CD8-positive, alpha-beta T cell (primary cell): ENCODE measurements at regions of chr14 and their contacts with region 1.

Region 1: GRCh38 chr14:93115069-93115820 is 480 bp downstream of the ITPK1 start:
- DNase-seq: peak; percentile 65 to 93 (median 81)
- ATAC-seq: peak; percentile 81
- H3K4me3 ChIP-seq: peak overlapping the region; percentile 58 to 76
- H3K4me3 Mint-ChIP-seq: peak overlapping the region; percentile 88
- H3K27ac ChIP-seq: peak overlapping the region; percentile 43 to 53
- H3K27ac Mint-ChIP-seq: peak overlapping the region; percentile 89
- H3K4me1 ChIP-seq: peaks cover 34% of the 10 kb centered on the region
- H3K4me1 Mint-ChIP-seq: peaks cover 34% of the 10 kb centered on the region
- H3K27me3 ChIP-seq: no peaks in the 10 kb centered on the region
- H3K27me3 Mint-ChIP-seq: no peaks in the 10 kb centered on the region
- CTCF ChIP-seq: no peak

Region 2: GRCh38 chr14:93033983-93034670 is 81.1 kb before region 1 on chr14:
- CTCF ChIA-PET with region 1: interaction called, 43 read pairs
- POLR2A ChIA-PET with region 1: interaction called, 5 read pairs
- intact Hi-C with region 1: loop called (anchors 1 to 5 kb)
- DNase-seq: peak; percentile 19 to 82 (median 65)
- ATAC-seq: peak; percentile 89
- H3K4me3 ChIP-seq: peak overlapping the region in 1 of 2 experiments; percentile 38
- H3K4me3 Mint-ChIP-seq: peak overlapping the region; percentile 77
- H3K27ac ChIP-seq: peak overlapping the region; percentile 49 to 54
- H3K27ac Mint-ChIP-seq: peak overlapping the region; percentile 88
- H3K4me1 ChIP-seq: peaks cover 29% of the 10 kb centered on the region
- H3K4me1 Mint-ChIP-seq: peaks cover 36% of the 10 kb centered on the region
- H3K27me3 ChIP-seq: no peaks in the 10 kb centered on the region
- H3K27me3 Mint-ChIP-seq: no peaks in the 10 kb centered on the region
- CTCF ChIP-seq: peak; percentile 74

Region 3: DNA sequence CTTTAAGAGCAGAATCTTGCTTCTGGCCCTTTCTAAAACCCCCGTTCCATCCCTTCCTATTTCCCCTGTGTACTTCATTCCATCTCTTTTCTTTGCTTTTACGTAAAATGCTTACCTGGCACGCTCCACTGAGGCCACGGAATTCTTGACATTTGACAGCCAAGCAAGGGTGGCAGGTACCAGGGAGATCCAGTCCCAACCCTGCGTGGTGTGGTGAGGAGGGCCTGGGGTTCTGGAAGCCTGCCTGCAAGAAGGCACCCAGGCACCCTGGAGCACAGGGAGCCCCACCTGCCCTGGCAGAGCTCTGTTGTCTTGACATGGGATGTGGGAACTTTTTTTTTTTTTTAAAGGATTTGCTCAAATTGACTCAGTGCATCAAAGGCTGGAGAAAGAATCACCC is 48.2 kb before region 1 on chr14:
- CTCF ChIA-PET with region 1: interaction called, 65 read pairs
- POLR2A ChIA-PET with region 1: interaction called, 6 read pairs
- intact Hi-C with region 1: loop called in 1 of 2 experiments (anchors 2 kb)
- DNase-seq: no peak
- ATAC-seq: no peak
- H3K4me3 ChIP-seq: no peak overlapping the region
- H3K4me3 Mint-ChIP-seq: peak overlapping the region; percentile 79
- H3K27ac ChIP-seq: peak overlapping the region; percentile 57 to 74
- H3K27ac Mint-ChIP-seq: peak overlapping the region; percentile 91
- H3K4me1 ChIP-seq: peaks cover 58% of the 10 kb centered on the region
- H3K4me1 Mint-ChIP-seq: peaks cover 73% of the 10 kb centered on the region
- H3K27me3 ChIP-seq: no peaks in the 10 kb centered on the region
- H3K27me3 Mint-ChIP-seq: no peaks in the 10 kb centered on the region
- CTCF ChIP-seq: no peak

Region 4: GRCh38 chr14:93126111-93126510 is 10.9 kb after region 1 on chr14:
- CTCF ChIA-PET with region 1: interaction called, 249 read pairs
- POLR2A ChIA-PET with region 1: no interaction called
- intact Hi-C with region 1: no loop called
- DNase-seq: no peak
- ATAC-seq: no peak
- H3K4me3 ChIP-seq: no peak overlapping the region
- H3K4me3 Mint-ChIP-seq: no peak overlapping the region
- H3K27ac ChIP-seq: no peak overlapping the region
- H3K27ac Mint-ChIP-seq: no peak overlapping the region
- H3K4me1 ChIP-seq: no peaks in the 10 kb centered on the region
- H3K4me1 Mint-ChIP-seq: no peaks in the 10 kb centered on the region
- H3K27me3 ChIP-seq: no peaks in the 10 kb centered on the region
- H3K27me3 Mint-ChIP-seq: no peaks in the 10 kb centered on the region
- CTCF ChIP-seq: no peak

Region 5: GRCh38 chr14:93184388-93185353 is 69.4 kb after region 1 on chr14 and contains the starts of genes LYSET and MOAP1:
- CTCF ChIA-PET with region 1: interaction called, 35 read pairs
- POLR2A ChIA-PET with region 1: interaction called, 27 read pairs
- intact Hi-C with region 1: loop called (anchors 1 kb)
- DNase-seq: peak; percentile 84 to 97 (median 92)
- ATAC-seq: peak; percentile 86
- H3K4me3 ChIP-seq: peak within 1 kb of the TSS; percentile 89 to 100
- H3K4me3 Mint-ChIP-seq: peak within 1 kb of the TSS; percentile 92
- H3K27ac ChIP-seq: peak within 1 kb of the TSS; percentile 97 to 100
- H3K27ac Mint-ChIP-seq: peak within 1 kb of the TSS; percentile 95
- H3K4me1 ChIP-seq: peaks cover 34% of the 10 kb centered on the region
- H3K4me1 Mint-ChIP-seq: peaks cover 45% of the 10 kb centered on the region
- H3K27me3 ChIP-seq: no peaks in the 10 kb centered on the region
- H3K27me3 Mint-ChIP-seq: no peaks in the 10 kb centered on the region
- CTCF ChIP-seq: peak; percentile 49
- total RNA-seq, gene LYSET: 2.4 to 5.1 TPM
- total RNA-seq, gene MOAP1: 114 to 122 TPM

Region 6: GRCh38 chr14:93892923-93893558 is 777.8 kb after region 1 on chr14:
- CTCF ChIA-PET with region 1: interaction called, 3 read pairs
- POLR2A ChIA-PET with region 1: no interaction called
- intact Hi-C with region 1: loop called in 1 of 2 experiments (anchors 10 kb)
- DNase-seq: peak; percentile 51 to 82 (median 64)
- ATAC-seq: peak; percentile 69
- H3K4me3 ChIP-seq: no peak overlapping the region
- H3K4me3 Mint-ChIP-seq: no peak overlapping the region
- H3K27ac ChIP-seq: no peak overlapping the region
- H3K27ac Mint-ChIP-seq: no peak overlapping the region
- H3K4me1 ChIP-seq: peaks cover 3% of the 10 kb centered on the region
- H3K4me1 Mint-ChIP-seq: no peaks in the 10 kb centered on the region
- H3K27me3 ChIP-seq: peaks cover 0 to 3% of the 10 kb centered on the region in 2 experiments
- H3K27me3 Mint-ChIP-seq: peaks cover 20% of the 10 kb centered on the region
- CTCF ChIP-seq: peak; percentile 94